WTC11 (cell line): ENCODE measurements at regions of chr11 and their contacts with region 1.

Region 1: GRCh38 chr11:74449369-74449931 is 17.9 kb downstream of the KCNE3 start:
- DNase-seq: no peak
- ATAC-seq: peak; percentile 82
- H3K4me3 Mint-ChIP-seq: no peak overlapping the region
- H3K27ac Mint-ChIP-seq: no peak overlapping the region
- H3K4me1 Mint-ChIP-seq: peaks cover 6% of the 10 kb centered on the region
- H3K27me3 Mint-ChIP-seq: no peaks in the 10 kb centered on the region; the same call in 1 of the 2 replicates
- CTCF ChIP-seq: peak; percentile 40; the same call in 1 of the 2 replicates

Region 2: GRCh38 chr11:74255741-74256369 is 193.6 kb before region 1 on chr11:
- CTCF ChIA-PET with region 1: interaction called, 80 read pairs
- POLR2A ChIA-PET with region 1: no interaction called
- DNase-seq: peak; percentile 50
- ATAC-seq: peak; percentile 63
- H3K4me3 Mint-ChIP-seq: no peak overlapping the region
- H3K27ac Mint-ChIP-seq: no peak overlapping the region
- H3K4me1 Mint-ChIP-seq: no peaks in the 10 kb centered on the region
- H3K27me3 Mint-ChIP-seq: peaks cover 7% of the 10 kb centered on the region
- CTCF ChIP-seq: peak; percentile 84

Region 3: GRCh38 chr11:74321487-74322188 is 127.8 kb before region 1 on chr11:
- CTCF ChIA-PET with region 1: interaction called, 33 read pairs
- POLR2A ChIA-PET with region 1: no interaction called
- DNase-seq: peak; percentile 39
- ATAC-seq: 0 out of 2 replicates have a peak, but pooled peaks have one; percentile 58
- H3K4me3 Mint-ChIP-seq: no peak overlapping the region
- H3K27ac Mint-ChIP-seq: no peak overlapping the region
- H3K4me1 Mint-ChIP-seq: peaks cover 5% of the 10 kb centered on the region; the same call in 1 of the 2 replicates
- H3K27me3 Mint-ChIP-seq: peaks cover 8% of the 10 kb centered on the region
- CTCF ChIP-seq: peak; percentile 61

Region 4: DNA sequence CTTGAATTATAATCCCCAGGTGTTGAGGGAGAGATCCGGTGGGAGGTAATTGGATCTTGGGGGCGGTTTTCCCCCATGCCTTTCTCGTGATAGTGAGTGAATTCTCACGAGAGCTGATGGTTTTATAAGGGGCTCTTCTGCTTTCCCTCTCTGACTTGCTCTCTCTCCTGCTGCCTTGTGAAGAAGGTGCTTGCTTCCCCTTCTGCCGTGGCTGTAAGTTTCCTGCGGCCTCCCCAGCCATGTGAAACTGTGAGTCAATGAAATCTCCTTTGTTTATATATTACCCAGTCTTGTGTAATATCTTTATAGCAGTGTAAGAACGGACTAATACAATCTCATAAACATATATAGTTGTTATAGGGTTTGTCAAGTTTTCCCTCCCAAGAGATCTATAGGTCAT is 14.9 kb before region 1 on chr11:
- CTCF ChIA-PET with region 1: interaction called, 31 read pairs
- POLR2A ChIA-PET with region 1: no interaction called
- DNase-seq: no peak
- ATAC-seq: no peak
- H3K4me3 Mint-ChIP-seq: no peak overlapping the region
- H3K27ac Mint-ChIP-seq: no peak overlapping the region
- H3K4me1 Mint-ChIP-seq: no peaks in the 10 kb centered on the region
- H3K27me3 Mint-ChIP-seq: no peaks in the 10 kb centered on the region; the same call in 1 of the 2 replicates
- CTCF ChIP-seq: no peak

Region 5: GRCh38 chr11:74487875-74488274 is 38.4 kb after region 1 on chr11:
- CTCF ChIA-PET with region 1: interaction called, 23 read pairs
- POLR2A ChIA-PET with region 1: interaction called, 9 read pairs
- DNase-seq: peak; percentile 26
- ATAC-seq: peak; percentile 63
- H3K4me3 Mint-ChIP-seq: no peak overlapping the region
- H3K27ac Mint-ChIP-seq: no peak overlapping the region
- H3K4me1 Mint-ChIP-seq: peaks cover 14% of the 10 kb centered on the region
- H3K27me3 Mint-ChIP-seq: no peaks in the 10 kb centered on the region
- CTCF ChIP-seq: no peak

Region 6: DNA sequence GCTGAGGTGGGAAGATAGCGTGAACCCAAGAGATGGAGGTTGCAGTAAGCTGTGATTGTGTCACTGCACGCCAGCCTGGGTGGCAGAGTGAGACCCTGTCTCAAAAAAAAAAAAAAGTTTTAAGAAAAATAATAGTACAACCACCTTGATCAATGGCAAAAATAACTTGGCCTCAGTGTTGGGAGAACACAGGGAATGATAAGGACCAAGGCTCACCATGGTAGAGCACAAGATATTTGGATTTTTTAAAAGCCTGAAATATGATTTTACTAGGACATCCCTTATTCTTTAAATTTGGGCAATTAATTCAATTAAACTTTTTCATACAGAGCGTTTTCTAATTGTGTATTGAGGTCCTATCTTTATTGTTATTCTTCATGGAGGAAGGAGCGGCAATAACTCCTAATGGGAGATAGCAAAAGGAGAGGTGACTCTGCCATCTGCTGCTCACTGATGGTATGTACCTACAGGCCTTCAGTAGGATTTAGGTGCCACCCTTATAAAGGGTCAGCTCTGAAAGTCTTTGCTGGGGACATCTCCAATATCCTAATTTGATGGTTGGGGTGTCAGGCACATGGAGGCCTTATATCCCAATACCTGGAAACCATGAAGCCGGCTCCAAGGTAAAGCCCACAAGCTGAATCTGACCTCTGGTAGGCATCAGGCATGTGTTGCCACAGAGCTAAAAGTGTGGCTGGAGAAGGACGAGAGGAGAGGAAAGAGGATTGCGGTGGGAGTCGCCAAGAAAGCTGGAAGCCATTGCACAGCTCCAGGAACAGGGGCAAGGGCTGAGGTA is 121.0 kb after region 1 on chr11:
- CTCF ChIA-PET with region 1: interaction called, 212 read pairs
- POLR2A ChIA-PET with region 1: no interaction called
- DNase-seq: peak; percentile 53
- ATAC-seq: peak; percentile 95
- H3K4me3 Mint-ChIP-seq: no peak overlapping the region
- H3K27ac Mint-ChIP-seq: no peak overlapping the region
- H3K4me1 Mint-ChIP-seq: no peaks in the 10 kb centered on the region
- H3K27me3 Mint-ChIP-seq: no peaks in the 10 kb centered on the region
- CTCF ChIP-seq: no peak

Region 7: DNA sequence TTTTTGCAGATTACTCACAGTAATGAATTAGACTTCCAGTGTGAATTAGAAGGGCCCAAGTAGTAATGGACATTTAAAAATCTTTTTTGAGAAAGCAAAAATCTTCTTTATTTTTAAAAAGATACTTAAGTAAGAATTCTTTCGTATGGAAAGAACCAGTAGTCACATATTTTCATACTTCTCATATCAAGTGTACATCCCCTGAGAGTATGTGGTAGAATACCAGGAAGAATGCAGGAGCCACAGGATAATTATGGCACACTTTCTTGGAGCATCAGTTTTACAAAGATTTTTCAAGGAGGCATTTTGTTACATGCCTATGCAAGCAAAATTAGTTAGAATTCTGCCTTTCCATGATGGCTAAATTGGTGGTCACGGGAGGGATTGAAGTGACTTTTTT is 171.1 kb after region 1 on chr11:
- CTCF ChIA-PET with region 1: no interaction called
- POLR2A ChIA-PET with region 1: no interaction called
- DNase-seq: no peak
- ATAC-seq: no peak
- H3K4me3 Mint-ChIP-seq: no peak overlapping the region
- H3K27ac Mint-ChIP-seq: no peak overlapping the region
- H3K4me1 Mint-ChIP-seq: 0 out of 2 replicates have a peak, but pooled peaks cover 2% of the 10 kb centered on the region
- H3K27me3 Mint-ChIP-seq: no peaks in the 10 kb centered on the region
- CTCF ChIP-seq: no peak